ENCODE measurements at regions of chr6 and their contacts with region 1.

Region 1: DNA sequence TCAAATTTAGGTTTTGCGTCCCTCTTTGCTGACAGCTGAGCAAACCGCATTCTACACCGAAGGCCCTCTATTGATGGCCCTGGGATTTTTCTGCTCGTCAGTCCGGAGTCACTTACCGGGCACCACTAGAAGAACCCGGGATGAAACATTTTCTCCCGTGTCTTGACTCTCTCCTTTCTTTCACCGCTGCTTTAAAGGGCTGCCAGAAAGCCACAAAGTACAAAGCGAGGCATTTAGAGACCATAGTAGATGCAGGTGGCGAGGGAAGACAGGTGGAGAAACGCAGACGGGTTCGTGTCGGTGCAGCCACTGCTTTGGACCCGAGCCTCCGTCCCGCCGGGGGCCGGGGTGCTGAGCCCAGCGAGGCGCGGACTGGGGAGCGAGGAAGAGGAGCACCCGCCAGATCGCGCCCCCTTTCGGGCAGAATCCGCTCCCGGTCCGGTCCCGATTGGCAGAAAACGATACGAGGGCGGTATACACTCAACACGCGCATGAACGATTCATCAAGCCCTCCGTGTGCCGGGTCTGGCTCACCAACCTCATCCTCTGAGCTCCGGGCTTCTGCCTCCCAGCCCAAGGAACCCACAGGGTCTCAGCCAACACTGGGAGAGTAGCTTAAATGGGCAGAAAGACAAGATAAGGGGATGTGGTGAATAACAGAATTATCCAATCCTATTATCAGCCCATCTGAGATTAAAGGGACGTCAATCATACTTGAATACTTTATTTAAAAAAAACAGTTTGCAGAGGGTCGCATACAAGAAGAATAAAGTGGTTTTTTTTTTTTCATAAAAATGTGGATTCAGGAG is 84.9 kb downstream of the TRIM27 start:
- DNase-seq: peak; percentile 85 to 90
- H3K4me3 ChIP-seq: peak overlapping the region; percentile 66
- H3K4me3 Mint-ChIP-seq: peak overlapping the region; percentile 96
- H3K27ac Mint-ChIP-seq: peak overlapping the region; percentile 94
- H3K4me1 ChIP-seq: no peaks in the 10 kb centered on the region; the same call in 1 of the 2 replicates
- H3K4me1 Mint-ChIP-seq: peaks cover 6% of the 10 kb centered on the region
- H3K27me3 ChIP-seq: no peaks in the 10 kb centered on the region
- H3K27me3 Mint-ChIP-seq: peaks cover 3% of the 10 kb centered on the region
- CTCF ChIP-seq: peak; percentile 68 to 75

Region 2: DNA sequence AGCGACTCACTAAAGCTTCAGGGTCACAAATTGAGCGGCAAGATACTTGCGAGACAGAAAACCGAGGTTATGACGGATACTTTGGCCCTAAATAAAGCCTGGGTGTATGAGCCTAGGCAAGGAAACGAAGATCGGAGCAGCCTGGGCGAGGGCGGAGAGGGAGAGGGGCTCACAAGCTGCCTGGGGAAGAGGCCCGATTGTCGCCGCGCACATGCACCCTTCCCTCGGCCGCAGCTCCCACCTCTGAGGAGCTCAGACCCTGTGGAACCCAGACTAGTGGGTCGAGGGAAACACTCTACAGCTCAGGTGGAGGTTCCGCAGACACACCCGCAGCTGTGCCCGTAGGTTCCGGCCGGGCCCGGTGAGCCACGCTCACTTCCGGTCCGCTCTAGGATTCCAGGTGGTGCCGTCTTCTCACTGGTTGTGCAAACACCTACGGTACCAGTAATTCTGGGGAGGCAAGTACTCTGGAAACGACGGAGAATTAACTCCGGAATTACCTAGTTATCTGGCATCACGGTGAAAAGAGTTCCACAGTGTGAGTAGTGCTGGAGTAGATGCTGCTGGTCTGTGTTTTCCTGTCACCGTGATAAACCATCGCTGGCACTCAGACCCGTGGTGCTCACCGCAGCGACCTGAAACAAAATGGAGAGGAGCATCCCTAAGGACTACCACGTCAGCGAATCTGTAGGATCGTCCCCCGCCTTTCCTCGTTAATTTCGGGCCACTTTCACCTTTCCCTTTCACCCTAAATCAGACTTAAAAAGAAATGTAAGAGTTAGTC is 251.7 kb before region 1 on chr6:
- CTCF ChIA-PET with region 1: no interaction called
- POLR2A ChIA-PET with region 1: no interaction called
- intact Hi-C with region 1: no loop called
- DNase-seq: no peak
- H3K4me3 ChIP-seq: no peak overlapping the region
- H3K4me3 Mint-ChIP-seq: no peak overlapping the region
- H3K27ac Mint-ChIP-seq: no peak overlapping the region
- H3K4me1 ChIP-seq: no peaks in the 10 kb centered on the region
- H3K4me1 Mint-ChIP-seq: peaks cover 11% of the 10 kb centered on the region
- H3K27me3 ChIP-seq: no peaks in the 10 kb centered on the region
- H3K27me3 Mint-ChIP-seq: peaks cover 7% of the 10 kb centered on the region
- CTCF ChIP-seq: no peak

Region 3: DNA sequence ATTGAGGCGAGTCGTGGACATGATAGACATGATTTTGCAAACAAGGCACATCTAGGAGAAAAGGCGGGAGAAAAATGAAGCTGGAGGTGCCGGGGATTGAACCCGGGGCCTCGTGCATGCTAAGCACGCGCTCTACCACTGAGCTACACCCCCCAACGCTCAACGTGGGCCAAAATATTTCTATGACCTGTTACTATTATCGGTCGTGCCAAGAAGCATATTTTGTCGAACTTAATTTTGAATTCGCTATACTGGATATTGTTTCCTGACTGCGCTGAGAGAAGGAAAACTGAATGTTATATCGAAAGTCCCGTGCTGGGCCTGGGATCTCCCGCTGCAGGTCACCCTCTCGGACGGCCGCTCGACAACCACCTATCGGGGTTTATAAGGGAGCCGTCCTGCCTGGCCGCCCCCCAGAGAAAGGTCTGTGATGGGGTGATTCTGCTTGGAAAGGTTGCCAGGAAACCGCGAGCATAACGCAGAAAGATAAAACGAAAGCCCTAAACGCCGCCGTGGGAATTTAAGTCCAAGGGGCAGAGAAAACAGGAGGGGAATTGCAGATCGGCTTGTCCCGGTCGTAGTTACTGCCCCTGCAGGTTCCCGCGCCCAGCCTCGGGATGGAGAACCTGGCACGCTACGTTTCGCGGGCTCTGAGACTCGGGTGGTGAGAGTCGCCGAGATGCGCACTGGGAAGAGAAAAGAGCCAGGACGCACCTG is 24.9 kb after region 1 on chr6:
- CTCF ChIA-PET with region 1: interaction called, 10 read pairs
- POLR2A ChIA-PET with region 1: no interaction called
- intact Hi-C with region 1: loop called (anchors 1 kb)
- DNase-seq: peak; percentile 85 to 87
- H3K4me3 ChIP-seq: peak overlapping the region; percentile 81
- H3K4me3 Mint-ChIP-seq: peak overlapping the region; percentile 79
- H3K27ac Mint-ChIP-seq: peak overlapping the region; percentile 96
- H3K4me1 ChIP-seq: peaks cover 11% of the 10 kb centered on the region
- H3K4me1 Mint-ChIP-seq: peaks cover 20% of the 10 kb centered on the region
- H3K27me3 ChIP-seq: no peaks in the 10 kb centered on the region
- H3K27me3 Mint-ChIP-seq: no peaks in the 10 kb centered on the region
- CTCF ChIP-seq: no peak

Region 4: GRCh38 chr6:28895134-28895812 is 56.4 kb after region 1 on chr6:
- CTCF ChIA-PET with region 1: interaction called, 11 read pairs
- POLR2A ChIA-PET with region 1: no interaction called
- intact Hi-C with region 1: loop called (anchors 1 kb)
- DNase-seq: peak; percentile 92 to 96
- H3K4me3 ChIP-seq: peak overlapping the region; percentile 62
- H3K4me3 Mint-ChIP-seq: peak overlapping the region; percentile 95
- H3K27ac Mint-ChIP-seq: peak overlapping the region; percentile 98
- H3K4me1 ChIP-seq: no peaks in the 10 kb centered on the region
- H3K4me1 Mint-ChIP-seq: no peaks in the 10 kb centered on the region
- H3K27me3 ChIP-seq: no peaks in the 10 kb centered on the region
- H3K27me3 Mint-ChIP-seq: no peaks in the 10 kb centered on the region
- CTCF ChIP-seq: no peak

Region 5: DNA sequence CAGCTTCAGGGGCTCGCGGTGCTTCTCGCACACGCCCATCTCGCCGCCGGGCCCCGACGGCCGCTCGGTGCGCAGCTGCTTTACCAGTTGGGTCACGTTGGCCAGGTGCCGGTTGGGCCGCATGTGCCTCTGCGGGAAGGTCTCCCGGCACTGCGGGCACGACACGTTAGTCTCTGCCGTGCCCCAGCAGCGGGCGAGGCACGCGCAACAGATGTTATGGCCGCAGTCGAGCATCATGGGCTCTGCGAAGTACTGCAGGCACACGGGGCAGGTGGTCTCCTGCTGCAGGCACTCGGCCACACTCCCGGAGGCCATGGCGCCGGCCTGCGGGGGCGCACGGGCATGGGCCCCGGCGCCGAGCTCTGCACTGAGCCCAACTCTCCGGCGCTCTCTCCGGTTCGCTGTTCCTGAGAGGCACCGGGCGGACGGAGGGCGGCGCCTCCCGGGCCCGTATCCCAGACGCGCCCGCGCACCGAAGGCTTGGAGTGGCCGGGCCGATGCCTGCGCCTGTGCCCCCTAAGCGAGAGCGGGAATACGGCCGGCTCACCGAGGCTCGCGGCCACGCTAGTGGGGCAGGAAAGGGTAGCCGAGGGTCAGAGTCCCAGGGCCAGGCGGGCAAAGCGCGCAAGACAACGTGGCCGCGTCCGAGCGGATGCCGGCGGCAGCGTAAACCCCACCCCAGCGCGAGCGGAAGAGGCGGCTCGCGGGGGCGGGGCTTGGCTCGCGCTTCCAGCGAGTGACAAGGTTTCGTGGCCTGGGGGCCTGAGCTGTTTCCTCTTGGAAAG is 84.7 kb after region 1 on chr6 and contains the start of gene TRIM27:
- CTCF ChIA-PET with region 1: interaction called, 11 read pairs
- POLR2A ChIA-PET with region 1: interaction called, 5 read pairs
- intact Hi-C with region 1: no loop called
- DNase-seq: peak; percentile 89 to 92
- H3K4me3 ChIP-seq: peak within 1 kb of the TSS; percentile 96
- H3K4me3 Mint-ChIP-seq: peak within 1 kb of the TSS; percentile 94
- H3K27ac Mint-ChIP-seq: peak within 1 kb of the TSS; percentile 89
- H3K4me1 ChIP-seq: peaks cover 6% of the 10 kb centered on the region; the same call in 1 of the 2 replicates
- H3K4me1 Mint-ChIP-seq: peaks cover 7% of the 10 kb centered on the region
- H3K27me3 ChIP-seq: no peaks in the 10 kb centered on the region
- H3K27me3 Mint-ChIP-seq: no peaks in the 10 kb centered on the region
- CTCF ChIP-seq: peak in 1 of 2 experiments; percentile 9
- total RNA-seq, gene TRIM27: 47.6 and 48.7 TPM in 2 replicates

Region 6: DNA sequence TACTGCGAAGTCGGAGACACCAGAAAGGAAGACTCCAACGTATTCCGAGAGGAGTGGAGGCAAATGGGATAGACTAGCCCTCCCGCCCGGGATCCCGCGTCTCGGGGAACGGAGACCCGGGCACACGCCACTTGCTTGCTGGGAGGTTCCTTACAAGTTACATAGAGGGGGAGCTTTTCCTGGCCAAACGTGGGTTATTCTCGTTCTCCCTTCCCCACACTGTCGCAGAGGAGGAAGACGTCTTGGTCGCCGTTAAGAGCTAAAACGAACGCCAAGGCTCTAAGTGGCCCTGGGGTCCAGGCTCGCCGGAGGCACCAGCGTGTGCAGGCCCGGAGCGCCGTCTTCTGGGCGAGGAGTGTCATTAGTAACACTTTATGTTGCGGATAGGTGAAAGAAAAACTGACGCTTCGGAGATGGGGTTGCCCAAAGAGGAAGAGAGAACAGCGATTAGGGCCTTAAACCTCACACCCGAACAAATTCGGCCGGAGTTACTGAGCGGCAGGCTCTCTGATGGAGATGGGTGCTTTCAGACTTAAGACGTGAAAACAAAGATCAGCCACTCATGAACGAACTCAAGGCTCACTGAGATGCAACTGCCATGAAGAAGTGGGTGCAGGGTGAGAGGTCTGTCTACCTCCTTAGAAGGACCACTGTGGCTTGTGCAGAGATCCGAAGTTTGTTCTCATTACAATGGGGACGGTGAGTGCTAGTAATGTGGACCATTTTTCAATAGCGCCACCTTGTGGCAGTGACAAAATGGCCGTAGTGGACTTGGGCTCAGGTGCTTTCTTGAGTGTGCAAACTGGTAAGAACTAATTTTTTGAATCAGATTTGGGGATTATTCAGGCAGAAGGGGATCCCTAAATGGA is 178.0 kb after region 1 on chr6:
- CTCF ChIA-PET with region 1: interaction called, 24 read pairs
- POLR2A ChIA-PET with region 1: no interaction called
- intact Hi-C with region 1: loop called (anchors 1 kb)
- DNase-seq: peak; percentile 80 to 82
- H3K4me3 ChIP-seq: peak overlapping the region; percentile 53
- H3K4me3 Mint-ChIP-seq: peak overlapping the region; percentile 96
- H3K27ac Mint-ChIP-seq: peak overlapping the region; percentile 41
- H3K4me1 ChIP-seq: peaks cover 3% of the 10 kb centered on the region; the same call in 1 of the 2 replicates
- H3K4me1 Mint-ChIP-seq: peaks cover 6% of the 10 kb centered on the region
- H3K27me3 ChIP-seq: no peaks in the 10 kb centered on the region
- H3K27me3 Mint-ChIP-seq: peaks cover 5% of the 10 kb centered on the region
- CTCF ChIP-seq: peak; percentile 66 to 81

Measured in Caco-2 (cell line).